Activated CD4-positive, alpha-beta memory T cell treated with anti-CD3 and anti-CD28 coated beads for 36 hours (primary cell): ENCODE measurements at regions of chr9 and their contacts with region 1.

Region 1: DNA sequence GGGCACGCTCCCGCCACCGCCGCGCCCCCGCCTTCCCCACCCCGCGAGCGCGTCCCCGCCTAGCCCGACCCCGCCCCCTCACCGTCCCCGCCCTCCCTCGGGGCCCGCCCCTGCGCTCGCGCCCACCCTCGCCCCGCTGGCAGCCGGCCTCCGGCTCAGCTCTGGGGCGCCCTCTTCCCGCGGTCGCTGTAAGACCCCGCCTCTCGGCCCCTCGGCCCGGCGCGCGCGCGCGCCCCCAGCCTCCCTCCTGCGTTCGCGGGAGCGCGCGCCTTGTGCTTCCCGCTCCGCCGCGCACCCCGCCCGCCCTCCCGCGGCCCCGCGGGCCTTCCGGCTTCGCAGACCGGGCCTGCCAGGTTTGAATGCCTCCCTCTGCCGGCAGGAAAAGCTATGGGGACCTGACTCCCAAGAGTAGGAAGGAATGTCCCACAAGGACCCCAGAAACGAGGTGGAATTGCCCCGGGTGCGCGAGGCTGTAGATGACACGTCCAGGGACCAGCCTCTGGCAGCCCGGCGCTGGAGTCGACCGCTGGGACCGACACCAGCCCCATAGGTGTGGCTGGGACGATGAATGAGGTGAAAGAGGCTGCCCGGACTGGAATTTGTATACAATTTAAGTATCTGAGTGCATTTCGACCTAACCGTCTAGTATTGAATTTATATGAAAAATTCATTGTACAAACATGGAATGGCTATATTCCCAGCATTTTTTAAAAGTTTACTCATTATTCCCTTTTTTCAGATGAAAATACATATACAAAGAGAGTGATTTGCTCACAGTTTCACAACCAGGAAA is 416 bp upstream of the PTBP3 start:
- DNase-seq: peak; percentile 96
- H3K4me3 Mint-ChIP-seq: peak overlapping the region; percentile 92
- H3K27ac Mint-ChIP-seq: peak overlapping the region; percentile 97
- H3K4me1 Mint-ChIP-seq: peaks cover 31% of the 10 kb centered on the region
- H3K27me3 Mint-ChIP-seq: no peaks in the 10 kb centered on the region

Region 2: DNA sequence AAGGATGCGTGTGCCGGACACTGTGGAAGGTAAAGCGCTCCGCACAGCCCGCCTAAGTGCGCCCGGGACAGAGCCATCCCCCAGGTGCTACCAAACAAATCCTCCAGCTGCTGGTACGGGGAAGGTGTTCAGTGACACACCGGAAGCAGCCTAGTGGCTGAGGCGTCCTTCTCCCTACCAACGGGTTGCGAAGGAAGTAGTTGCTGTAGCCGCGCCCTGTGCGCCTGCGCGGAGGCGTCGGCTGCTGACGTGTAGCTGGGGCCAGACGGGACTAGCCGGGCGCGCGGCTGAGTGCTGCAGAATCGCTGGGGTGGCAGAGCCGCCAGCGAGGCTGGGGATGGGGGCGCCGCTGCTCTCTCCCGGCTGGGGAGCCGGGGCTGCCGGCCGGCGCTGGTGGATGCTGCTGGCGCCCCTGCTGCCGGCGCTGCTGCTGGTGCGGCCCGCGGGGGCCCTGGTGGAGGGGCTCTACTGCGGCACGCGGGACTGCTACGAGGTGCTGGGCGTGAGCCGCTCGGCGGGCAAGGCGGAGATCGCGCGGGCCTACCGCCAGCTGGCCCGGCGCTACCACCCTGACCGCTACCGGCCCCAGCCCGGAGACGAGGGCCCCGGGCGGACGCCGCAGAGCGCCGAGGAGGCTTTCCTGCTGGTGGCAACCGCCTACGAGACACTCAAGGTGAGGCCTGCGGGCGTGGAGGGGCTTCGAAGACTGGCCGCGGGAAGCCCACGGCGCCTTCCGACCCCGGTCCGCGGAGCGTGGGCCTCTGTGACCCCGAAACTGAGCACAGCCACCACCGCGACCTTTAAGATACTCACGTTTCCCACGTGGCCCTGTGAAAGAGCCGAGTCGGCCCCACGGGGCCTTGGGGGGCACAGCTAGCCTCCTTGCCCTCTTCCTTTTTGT is 702.5 kb before region 1 on chr9 and contains the start of gene DNAJC25:
- CTCF ChIA-PET with region 1: no interaction called
- POLR2A ChIA-PET with region 1: no interaction called
- intact Hi-C with region 1: loop called (anchors 5 kb)
- DNase-seq: peak; percentile 98
- H3K4me3 Mint-ChIP-seq: peak within 1 kb of the TSS; percentile 90
- H3K27ac Mint-ChIP-seq: peak within 1 kb of the TSS; percentile 74
- H3K4me1 Mint-ChIP-seq: peaks cover 43% of the 10 kb centered on the region
- H3K27me3 Mint-ChIP-seq: no peaks in the 10 kb centered on the region
- total RNA-seq, gene DNAJC25: 4.2 to 4.5 TPM

Region 3: GRCh38 chr9:112174218-112174964 is 159.4 kb before region 1 on chr9:
- CTCF ChIA-PET with region 1: interaction called, 5 read pairs
- POLR2A ChIA-PET with region 1: interaction called, 5 read pairs
- intact Hi-C with region 1: loop called (anchors 1 kb)
- DNase-seq: peak; percentile 88
- H3K4me3 Mint-ChIP-seq: peak overlapping the region; percentile 80
- H3K27ac Mint-ChIP-seq: peak overlapping the region; percentile 84
- H3K4me1 Mint-ChIP-seq: peaks cover 40% of the 10 kb centered on the region
- H3K27me3 Mint-ChIP-seq: peaks cover 8% of the 10 kb centered on the region

Region 4: GRCh38 chr9:112278152-112278551 is 55.7 kb before region 1 on chr9:
- CTCF ChIA-PET with region 1: no interaction called
- POLR2A ChIA-PET with region 1: no interaction called
- intact Hi-C with region 1: loop called (anchors 2 kb)
- DNase-seq: no peak
- H3K4me3 Mint-ChIP-seq: no peak overlapping the region
- H3K27ac Mint-ChIP-seq: no peak overlapping the region
- H3K4me1 Mint-ChIP-seq: peaks cover 56% of the 10 kb centered on the region
- H3K27me3 Mint-ChIP-seq: no peaks in the 10 kb centered on the region

Region 5: GRCh38 chr9:112355427-112355897 is 21.6 kb after region 1 on chr9:
- CTCF ChIA-PET with region 1: interaction called, 12 read pairs
- POLR2A ChIA-PET with region 1: no interaction called
- intact Hi-C with region 1: loop called (anchors 1 kb)
- DNase-seq: no peak
- H3K4me3 Mint-ChIP-seq: no peak overlapping the region
- H3K27ac Mint-ChIP-seq: peak overlapping the region; percentile 49
- H3K4me1 Mint-ChIP-seq: peaks cover 20% of the 10 kb centered on the region
- H3K27me3 Mint-ChIP-seq: no peaks in the 10 kb centered on the region

Region 6: DNA sequence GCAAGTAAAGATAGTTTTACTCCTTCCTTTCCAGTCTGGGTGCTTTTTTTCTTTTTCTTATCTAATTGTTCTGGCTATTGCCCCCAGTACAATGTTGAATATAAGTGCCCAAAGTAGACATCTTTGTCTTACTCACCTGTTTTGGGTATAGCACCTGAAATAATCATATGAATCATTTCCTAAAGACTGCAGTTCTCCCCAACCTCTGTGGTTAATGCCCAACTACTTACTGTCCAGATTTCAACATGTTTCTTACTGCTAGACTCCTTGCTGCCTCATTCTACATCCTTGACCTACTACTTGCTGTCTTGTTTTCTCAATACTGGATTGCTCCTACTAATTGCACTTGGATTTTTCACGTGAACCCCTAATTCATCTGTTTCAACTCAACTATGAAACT is 37.2 kb after region 1 on chr9:
- CTCF ChIA-PET with region 1: no interaction called
- POLR2A ChIA-PET with region 1: no interaction called
- intact Hi-C with region 1: no loop called
- DNase-seq: no peak
- H3K4me3 Mint-ChIP-seq: no peak overlapping the region
- H3K27ac Mint-ChIP-seq: no peak overlapping the region
- H3K4me1 Mint-ChIP-seq: peaks cover 3% of the 10 kb centered on the region
- H3K27me3 Mint-ChIP-seq: no peaks in the 10 kb centered on the region

Region 7: GRCh38 chr9:112486221-112487007 is 152.6 kb after region 1 on chr9 and contains the start of gene KIAA1958:
- CTCF ChIA-PET with region 1: no interaction called
- POLR2A ChIA-PET with region 1: interaction called, 6 read pairs
- intact Hi-C with region 1: loop called (anchors 5 kb)
- DNase-seq: peak; percentile 91
- H3K4me3 Mint-ChIP-seq: peak within 1 kb of the TSS; percentile 90
- H3K27ac Mint-ChIP-seq: peak within 1 kb of the TSS; percentile 81
- H3K4me1 Mint-ChIP-seq: peaks cover 22% of the 10 kb centered on the region
- H3K27me3 Mint-ChIP-seq: no peaks in the 10 kb centered on the region
- total RNA-seq, gene KIAA1958: 6.1 to 6.5 TPM